Activated CD4-positive, alpha-beta T cell treated with anti-CD3 and anti-CD28 coated beads, Interleukin-2, amount 10 ng/mL, durations not matched to agents 7 days and 5 days (primary cell): ENCODE measurements at regions of chr10 and their contacts with region 1.

Region 1: DNA sequence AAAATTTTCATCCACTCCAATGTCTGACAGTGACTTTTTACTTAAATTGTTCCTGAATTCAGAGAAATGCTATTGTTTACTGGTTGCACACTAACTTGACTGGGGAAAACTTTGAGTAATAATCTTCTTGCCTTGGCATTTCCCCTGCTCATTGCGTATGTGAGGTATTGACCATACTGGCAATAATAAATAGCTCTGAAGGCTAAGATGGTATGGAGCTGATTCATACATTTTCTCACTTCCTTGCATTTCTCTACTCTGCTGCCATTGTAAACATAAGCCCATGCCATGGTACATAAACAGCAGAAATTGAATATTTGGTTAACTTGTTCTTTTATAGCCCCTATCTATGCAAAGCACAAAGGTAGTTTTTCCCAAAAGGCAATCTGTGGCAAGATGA is 290.0 kb downstream of the RNLS start:
- DNase-seq: no peak
- H3K4me3 Mint-ChIP-seq: no peak overlapping the region
- H3K27ac Mint-ChIP-seq: no peak overlapping the region
- H3K4me1 Mint-ChIP-seq: peaks cover 5% of the 10 kb centered on the region
- H3K27me3 Mint-ChIP-seq: no peaks in the 10 kb centered on the region

Region 2: GRCh38 chr10:88059190-88059589 is 233.9 kb before region 1 on chr10:
- CTCF ChIA-PET with region 1: no interaction called
- POLR2A ChIA-PET with region 1: no interaction called
- DNase-seq: no peak
- H3K4me3 Mint-ChIP-seq: no peak overlapping the region
- H3K27ac Mint-ChIP-seq: no peak overlapping the region
- H3K4me1 Mint-ChIP-seq: peaks cover 11% of the 10 kb centered on the region
- H3K27me3 Mint-ChIP-seq: no peaks in the 10 kb centered on the region

Region 3: DNA sequence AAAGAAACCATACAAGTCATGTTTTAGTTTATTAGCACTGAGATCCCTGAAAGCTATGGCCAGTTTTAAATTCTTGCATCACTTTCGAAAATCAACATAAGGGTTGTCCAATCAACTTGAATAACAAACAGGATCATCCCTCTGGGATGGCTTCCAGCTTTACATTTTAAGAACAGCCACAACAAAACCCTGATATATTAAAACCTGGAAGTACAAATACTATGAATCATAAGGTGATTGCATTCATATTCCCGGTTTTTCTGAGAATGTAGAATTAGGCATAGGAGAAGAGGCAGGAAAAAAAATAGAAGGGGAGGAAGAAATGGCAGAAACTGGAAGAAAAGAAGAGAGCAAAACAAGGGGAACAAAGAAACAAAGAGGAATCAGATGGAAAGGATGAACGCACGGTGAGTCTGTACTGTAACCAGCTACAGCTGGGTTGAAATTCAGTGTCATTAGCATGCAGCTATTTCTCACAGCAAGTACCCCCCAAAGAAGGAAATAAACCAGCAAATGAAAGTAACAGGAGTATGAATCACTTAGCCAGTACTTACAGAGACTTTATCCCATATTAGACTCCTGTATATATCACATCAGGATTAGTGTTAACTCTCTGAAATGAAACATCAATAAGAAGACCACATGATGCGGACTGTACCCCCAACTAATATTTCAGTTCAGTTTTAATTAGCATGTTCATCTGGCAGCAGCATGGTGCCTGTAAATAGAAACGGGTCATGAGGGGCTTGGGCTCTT is 11.3 kb before region 1 on chr10:
- CTCF ChIA-PET with region 1: interaction called, 11 read pairs
- POLR2A ChIA-PET with region 1: no interaction called
- DNase-seq: no peak
- H3K4me3 Mint-ChIP-seq: no peak overlapping the region
- H3K27ac Mint-ChIP-seq: peak overlapping the region; percentile 6
- H3K4me1 Mint-ChIP-seq: peaks cover 40% of the 10 kb centered on the region
- H3K27me3 Mint-ChIP-seq: peaks cover 2% of the 10 kb centered on the region